H1 (cell line): ENCODE measurements at regions of chr1 and their contacts with region 1.

Region 1: DNA sequence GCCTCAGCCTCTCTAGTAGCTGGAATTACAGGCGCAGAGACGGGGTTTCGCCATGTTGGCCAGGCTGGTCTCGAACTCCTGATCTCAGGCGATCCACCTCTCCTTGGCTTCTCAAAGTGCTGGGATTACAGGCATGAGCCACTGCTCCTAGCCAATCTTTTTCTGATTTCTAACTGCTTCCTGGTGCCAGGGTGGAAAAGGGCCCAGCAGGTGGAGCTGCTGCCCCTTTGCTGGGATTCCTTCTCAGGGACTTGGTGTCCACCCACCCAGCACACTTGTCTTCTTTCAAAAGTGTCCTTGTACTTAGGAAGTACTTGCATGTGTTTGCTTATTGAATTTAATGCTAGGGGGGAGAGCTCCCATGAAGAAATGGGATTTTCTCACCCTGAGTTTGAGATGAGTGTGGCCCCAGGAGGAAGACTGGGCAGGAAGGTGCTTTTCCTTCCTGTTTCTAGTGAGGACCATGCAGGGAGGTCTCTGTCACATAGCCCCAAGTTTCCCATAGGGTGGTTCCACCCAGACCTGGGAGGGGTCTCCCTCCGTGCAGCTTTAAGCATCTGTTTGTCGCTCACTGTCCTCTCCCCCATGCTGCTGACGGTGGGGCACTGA is 14.2 kb downstream of the UTP11 start:
- DNase-seq: no peak
- H3K4me3 ChIP-seq: no peak overlapping the region
- H3K27ac ChIP-seq: no peak overlapping the region
- H3K4me1 ChIP-seq: peaks cover 12 to 36% (median 25%) of the 10 kb centered on the region in 4 experiments
- H3K27me3 ChIP-seq: no peaks in the 10 kb centered on the region
- CTCF ChIP-seq: peak; percentile 77 to 86 (median 80)
- EP300 ChIP-seq: no peak
- POLR2A ChIP-seq: no peak
- RAD21 ChIP-seq: peak; percentile 89 to 92

Region 2: DNA sequence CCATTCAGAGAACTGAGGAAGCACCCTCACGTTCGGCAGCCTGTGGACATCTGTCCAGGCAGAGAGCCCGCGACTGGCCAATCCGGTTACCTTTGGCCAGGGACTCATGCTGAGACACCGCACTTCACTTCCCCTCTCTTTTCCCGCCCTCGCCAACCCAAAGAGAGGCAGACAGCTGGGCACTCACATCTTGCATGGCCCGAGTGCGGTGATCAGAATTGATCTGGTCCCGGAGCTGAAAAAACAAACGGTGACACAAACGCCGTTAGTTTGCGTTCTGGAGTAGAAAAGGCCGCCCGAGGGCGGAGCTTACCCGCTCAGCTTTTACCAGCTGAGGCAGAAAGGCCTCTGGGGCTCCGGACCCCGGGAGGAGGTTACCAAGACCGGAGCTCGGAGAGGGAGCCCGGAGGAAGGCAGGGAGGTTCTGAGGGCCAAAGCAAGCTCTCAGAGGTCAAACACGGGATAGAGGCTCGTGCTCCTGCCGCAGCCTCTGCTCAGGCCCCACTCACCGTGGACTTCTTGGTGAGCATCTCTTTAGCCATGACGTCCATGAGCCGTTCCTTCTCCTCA is 37.2 kb before region 1 on chr1:
- CTCF ChIA-PET with region 1: interaction called, 211 read pairs
- POLR2A ChIA-PET with region 1: interaction called, 5 read pairs
- DNase-seq: no peak
- H3K4me3 ChIP-seq: peak overlapping the region; percentile 66 to 98 (median 95)
- H3K27ac ChIP-seq: peak overlapping the region; percentile 79
- H3K4me1 ChIP-seq: no peaks in the 10 kb centered on the region; a peak in 1 of 7 replicates
- H3K27me3 ChIP-seq: no peaks in the 10 kb centered on the region
- CTCF ChIP-seq: no peak
- EP300 ChIP-seq: no peak
- POLR2A ChIP-seq: 0 out of 3 replicates have a peak, but pooled peaks of 1 of the 2 experiments have one; percentile 24
- RAD21 ChIP-seq: no peak

Region 3: DNA sequence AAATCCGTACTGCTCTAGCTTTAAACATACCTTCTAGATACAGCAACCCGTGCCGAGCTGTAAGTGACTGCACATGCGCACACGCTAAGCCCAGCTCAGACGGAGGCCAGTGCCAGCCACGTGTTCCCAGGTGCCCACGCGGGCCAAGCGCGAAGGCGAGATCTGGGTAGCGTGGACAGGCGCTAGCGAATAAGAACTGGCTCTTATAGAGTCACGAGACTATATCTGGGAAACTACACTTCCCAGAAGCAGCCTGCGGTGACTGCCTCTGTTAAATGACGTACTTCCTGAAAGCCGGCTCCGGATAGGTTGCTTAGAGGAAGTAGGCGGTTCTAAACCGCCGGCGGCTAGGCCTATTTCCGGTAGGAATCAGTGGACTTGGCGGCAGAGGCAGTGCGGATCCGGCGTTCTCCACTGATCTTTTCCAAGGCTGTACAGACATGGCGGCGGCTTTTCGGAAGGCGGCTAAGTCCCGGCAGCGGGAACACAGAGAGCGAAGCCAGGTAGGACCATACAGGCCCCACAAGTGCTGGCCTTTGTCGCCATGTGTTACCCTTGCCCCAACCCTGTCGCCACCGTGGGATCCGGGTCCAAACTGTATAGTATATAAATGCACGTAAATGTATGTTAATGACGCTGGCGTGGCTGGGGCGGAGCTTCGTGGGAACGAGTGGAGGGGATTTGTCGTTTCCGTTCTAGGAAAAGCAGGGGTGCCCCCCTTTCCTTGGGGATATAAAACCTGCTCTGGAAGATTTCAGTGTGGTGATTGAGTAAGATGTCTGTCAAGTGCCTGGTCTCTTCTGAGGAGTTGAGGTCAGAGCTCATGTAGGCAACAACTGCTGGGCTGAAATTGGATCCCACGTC is 14.1 kb before region 1 on chr1 and contains the start of gene UTP11:
- CTCF ChIA-PET with region 1: interaction called, 29 read pairs
- POLR2A ChIA-PET with region 1: interaction called, 20 read pairs
- DNase-seq: peak; percentile 86 to 95
- H3K4me3 ChIP-seq: peak within 1 kb of the TSS; percentile 87 to 96 (median 90)
- H3K27ac ChIP-seq: peak within 1 kb of the TSS; percentile 85
- H3K4me1 ChIP-seq: peaks cover 0 to 9% (median 5%) of the 10 kb centered on the region in 4 experiments; a peak in 5 of 7 replicates
- H3K27me3 ChIP-seq: peaks cover 0 to 2% (median 0%) of the 10 kb centered on the region in 4 experiments; a peak in 1 of 7 replicates
- CTCF ChIP-seq: no peak; a peak in 1 of 4 replicates
- EP300 ChIP-seq: no peak
- POLR2A ChIP-seq: peak; percentile 68 to 84
- RAD21 ChIP-seq: no peak
- total RNA-seq, gene UTP11: 56.4 and 60.5 TPM in 2 replicates

Region 4: DNA sequence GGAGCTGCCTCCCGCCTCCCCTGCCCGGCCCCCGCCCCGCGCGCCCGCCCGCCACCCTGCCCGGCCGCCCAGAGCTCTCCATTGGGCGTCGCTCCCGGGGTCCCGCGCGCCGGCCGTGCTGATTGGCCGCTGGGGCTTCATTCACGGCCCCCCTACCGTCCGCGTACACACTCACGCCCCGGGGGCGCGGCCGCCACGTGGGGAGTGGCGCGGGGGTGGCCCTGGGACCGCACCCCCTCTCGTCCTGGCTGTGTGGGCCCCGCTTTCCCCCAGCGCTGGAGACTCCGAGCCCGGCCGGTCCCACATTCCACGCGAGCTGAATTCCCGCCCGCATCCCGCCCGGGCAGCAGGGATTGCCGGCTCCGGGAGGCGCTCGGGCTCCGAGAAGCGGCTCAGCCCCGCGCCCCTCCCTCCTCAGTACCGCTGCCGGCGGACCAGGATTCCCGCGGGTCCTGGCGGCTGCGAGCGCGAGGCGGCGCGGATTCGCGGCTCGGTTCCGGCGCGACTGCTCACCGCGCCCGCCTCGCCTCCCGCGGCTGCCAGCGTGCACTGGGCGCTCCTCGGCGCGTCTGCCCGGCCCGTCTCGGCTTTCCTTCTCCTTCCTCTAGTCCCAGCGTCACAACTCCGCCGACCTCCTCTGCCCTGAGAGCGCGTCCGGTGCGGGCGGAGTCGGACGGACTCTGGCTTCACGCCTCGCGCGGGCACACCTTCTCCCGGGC is 20.3 kb after region 1 on chr1:
- CTCF ChIA-PET with region 1: interaction called, 37 read pairs
- POLR2A ChIA-PET with region 1: interaction called, 59 read pairs
- DNase-seq: peak in 1 of 2 experiments; percentile 81
- H3K4me3 ChIP-seq: peak overlapping the region; percentile 48 to 68 (median 56)
- H3K27ac ChIP-seq: no peak overlapping the region
- H3K4me1 ChIP-seq: peaks cover 3 to 18% (median 10%) of the 10 kb centered on the region in 4 experiments
- H3K27me3 ChIP-seq: peaks cover 10 to 48% (median 40%) of the 10 kb centered on the region in 4 experiments; a peak in 6 of 7 replicates
- CTCF ChIP-seq: 0 out of 4 replicates have a peak, but pooled peaks of 1 of the 3 experiments have one; percentile 3
- EP300 ChIP-seq: no peak
- POLR2A ChIP-seq: no peak
- RAD21 ChIP-seq: peak in 1 of 2 experiments; percentile 18; a peak in 2 of 4 replicates

Region 5: GRCh38 chr1:38093569-38094520 is 67.1 kb after region 1 on chr1:
- CTCF ChIA-PET with region 1: no interaction called
- POLR2A ChIA-PET with region 1: no interaction called
- DNase-seq: no peak
- H3K4me3 ChIP-seq: no peak overlapping the region
- H3K27ac ChIP-seq: no peak overlapping the region
- H3K4me1 ChIP-seq: peaks cover 7 to 25% (median 15%) of the 10 kb centered on the region in 4 experiments
- H3K27me3 ChIP-seq: no peaks in the 10 kb centered on the region
- CTCF ChIP-seq: no peak
- EP300 ChIP-seq: no peak
- POLR2A ChIP-seq: no peak
- RAD21 ChIP-seq: no peak

Region 6: DNA sequence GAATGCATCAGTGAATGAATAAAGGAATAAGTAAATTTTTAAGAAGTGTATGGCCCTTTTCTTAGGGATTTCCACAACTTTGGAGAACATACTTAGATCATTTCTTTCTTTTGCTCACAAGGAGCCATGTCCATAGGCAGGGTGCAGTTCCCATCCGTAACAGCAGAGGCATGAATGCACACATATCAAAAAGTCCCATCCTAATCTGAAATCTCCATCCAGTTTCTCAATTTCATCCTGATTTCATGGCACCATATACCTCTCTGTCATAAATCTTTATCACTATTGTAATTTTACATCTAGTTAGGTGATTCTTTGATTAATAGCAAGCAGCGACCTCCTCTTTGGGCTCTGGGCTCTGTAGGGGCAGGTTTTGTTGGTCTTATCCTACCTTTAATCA is 473.7 kb after region 1 on chr1:
- CTCF ChIA-PET with region 1: interaction called, 39 read pairs
- POLR2A ChIA-PET with region 1: interaction called, 5 read pairs
- DNase-seq: no peak
- H3K4me3 ChIP-seq: no peak overlapping the region
- H3K27ac ChIP-seq: no peak overlapping the region
- H3K4me1 ChIP-seq: peaks cover 9 to 24% (median 16%) of the 10 kb centered on the region in 4 experiments
- H3K27me3 ChIP-seq: no peaks in the 10 kb centered on the region; a peak in 1 of 7 replicates
- CTCF ChIP-seq: peak; percentile 1 to 54 (median 19); a peak in 3 of 4 replicates
- EP300 ChIP-seq: no peak
- POLR2A ChIP-seq: no peak
- RAD21 ChIP-seq: peak; percentile 37 to 46; a peak in 3 of 4 replicates